MCF 10A (cell line): ENCODE measurements at regions of chr21 and their contacts with region 1.

Region 1: GRCh38 chr21:38755681-38756371 is 49.9 kb upstream of the ETS2 start:
- DNase-seq: peak; percentile 90
- H3K4me3 Mint-ChIP-seq: peak overlapping the region; percentile 26
- H3K27ac Mint-ChIP-seq: peak overlapping the region; percentile 96
- H3K4me1 Mint-ChIP-seq: peaks cover 31% of the 10 kb centered on the region
- H3K27me3 Mint-ChIP-seq: no peaks in the 10 kb centered on the region
- CTCF ChIP-seq: no peak

Region 2: GRCh38 chr21:38766987-38767722 is 11.3 kb after region 1 on chr21:
- CTCF ChIA-PET with region 1: interaction called, 6 read pairs
- POLR2A ChIA-PET with region 1: interaction called, 48 read pairs
- intact Hi-C with region 1: no loop called
- DNase-seq: peak; percentile 34
- H3K4me3 Mint-ChIP-seq: peak overlapping the region; percentile 43
- H3K27ac Mint-ChIP-seq: peak overlapping the region; percentile 97
- H3K4me1 Mint-ChIP-seq: peaks cover 16% of the 10 kb centered on the region
- H3K27me3 Mint-ChIP-seq: no peaks in the 10 kb centered on the region
- CTCF ChIP-seq: no peak

Region 3: DNA sequence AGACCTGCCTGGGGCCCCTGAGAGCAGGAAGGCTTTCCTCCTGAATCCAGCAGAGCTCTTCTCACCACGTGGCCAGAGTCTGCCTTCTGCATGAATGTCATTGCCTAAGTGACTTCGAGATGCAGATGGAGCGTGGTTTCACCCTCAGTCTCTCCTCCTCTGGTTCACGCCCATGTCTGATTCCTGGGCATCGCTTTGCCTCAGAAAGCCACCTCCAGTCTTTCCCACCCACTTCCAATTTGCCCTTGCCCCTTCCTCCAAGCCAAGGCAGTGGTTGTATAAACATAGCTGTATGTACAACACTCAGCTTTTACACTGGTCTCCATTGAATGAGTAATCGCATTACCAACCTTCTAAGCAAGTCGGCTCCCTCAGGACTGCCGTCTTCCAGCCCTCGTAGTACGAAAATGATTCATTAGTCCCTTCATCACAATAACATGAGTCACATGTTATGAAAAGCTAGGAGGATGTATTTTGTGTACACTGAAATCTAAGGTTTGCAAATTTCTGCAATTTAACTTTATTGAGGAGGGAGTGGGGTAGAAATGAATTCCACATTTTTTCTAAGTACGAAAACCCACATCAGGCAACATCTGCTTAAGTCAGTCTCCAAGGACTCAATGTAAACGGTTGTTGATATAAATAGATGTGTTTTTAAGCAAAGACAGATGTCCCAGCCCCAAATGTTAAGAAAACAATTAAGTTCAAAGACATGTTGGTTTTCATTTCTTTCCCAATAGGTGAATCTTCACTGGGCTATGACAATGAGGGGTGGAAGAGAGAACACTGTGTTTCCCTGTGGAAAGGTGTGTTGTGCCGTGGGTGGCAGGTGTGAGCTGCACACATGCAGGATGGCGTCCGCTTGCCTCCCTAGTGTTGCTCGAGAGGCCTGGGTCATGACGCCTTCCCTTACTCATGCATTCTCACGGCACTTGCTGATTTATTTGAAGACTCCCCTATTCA is 17.6 kb after region 1 on chr21:
- CTCF ChIA-PET with region 1: interaction called, 6 read pairs
- POLR2A ChIA-PET with region 1: interaction called, 48 read pairs
- intact Hi-C with region 1: loop called (anchors 1 kb)
- DNase-seq: peak; percentile 92
- H3K4me3 Mint-ChIP-seq: peak overlapping the region; percentile 56
- H3K27ac Mint-ChIP-seq: peak overlapping the region; percentile 95
- H3K4me1 Mint-ChIP-seq: peaks cover 39% of the 10 kb centered on the region
- H3K27me3 Mint-ChIP-seq: no peaks in the 10 kb centered on the region
- CTCF ChIP-seq: no peak

Region 4: DNA sequence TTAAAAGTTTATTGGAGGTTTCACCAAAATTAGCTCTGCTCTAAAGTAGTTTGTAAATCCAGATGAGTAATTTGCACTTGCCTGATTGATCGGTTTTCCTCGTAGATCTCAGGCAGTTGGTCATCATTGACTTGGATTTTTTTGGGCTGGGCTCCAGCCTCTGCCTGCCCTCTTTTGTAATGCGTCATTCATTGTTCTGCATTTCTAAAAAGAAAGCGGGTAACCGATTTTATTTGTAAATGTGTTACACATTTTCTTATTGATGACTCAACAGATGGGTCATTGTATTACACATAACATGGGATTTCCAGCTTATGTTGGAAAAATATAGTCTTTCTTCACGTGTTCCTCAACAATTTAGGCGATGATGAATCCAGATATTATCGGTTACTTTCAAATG is 55.4 kb after region 1 on chr21:
- CTCF ChIA-PET with region 1: interaction called, 4 read pairs
- POLR2A ChIA-PET with region 1: interaction called, 132 read pairs
- intact Hi-C with region 1: no loop called
- DNase-seq: peak; percentile 96
- H3K4me3 Mint-ChIP-seq: peak overlapping the region; percentile 97
- H3K27ac Mint-ChIP-seq: peak overlapping the region; percentile 83
- H3K4me1 Mint-ChIP-seq: peaks cover 33% of the 10 kb centered on the region
- H3K27me3 Mint-ChIP-seq: no peaks in the 10 kb centered on the region
- CTCF ChIP-seq: no peak

Region 5: GRCh38 chr21:39900491-39900890 is 1144.7 kb after region 1 on chr21:
- CTCF ChIA-PET with region 1: no interaction called
- POLR2A ChIA-PET with region 1: no interaction called
- intact Hi-C with region 1: no loop called
- DNase-seq: no peak
- H3K4me3 Mint-ChIP-seq: no peak overlapping the region
- H3K27ac Mint-ChIP-seq: no peak overlapping the region
- H3K4me1 Mint-ChIP-seq: no peaks in the 10 kb centered on the region
- H3K27me3 Mint-ChIP-seq: peaks cover 14% of the 10 kb centered on the region
- CTCF ChIP-seq: no peak